Naive thymus-derived CD4-positive, alpha-beta T cell (primary cell): ENCODE measurements at regions of chr18 and their contacts with region 1.

Region 1: DNA sequence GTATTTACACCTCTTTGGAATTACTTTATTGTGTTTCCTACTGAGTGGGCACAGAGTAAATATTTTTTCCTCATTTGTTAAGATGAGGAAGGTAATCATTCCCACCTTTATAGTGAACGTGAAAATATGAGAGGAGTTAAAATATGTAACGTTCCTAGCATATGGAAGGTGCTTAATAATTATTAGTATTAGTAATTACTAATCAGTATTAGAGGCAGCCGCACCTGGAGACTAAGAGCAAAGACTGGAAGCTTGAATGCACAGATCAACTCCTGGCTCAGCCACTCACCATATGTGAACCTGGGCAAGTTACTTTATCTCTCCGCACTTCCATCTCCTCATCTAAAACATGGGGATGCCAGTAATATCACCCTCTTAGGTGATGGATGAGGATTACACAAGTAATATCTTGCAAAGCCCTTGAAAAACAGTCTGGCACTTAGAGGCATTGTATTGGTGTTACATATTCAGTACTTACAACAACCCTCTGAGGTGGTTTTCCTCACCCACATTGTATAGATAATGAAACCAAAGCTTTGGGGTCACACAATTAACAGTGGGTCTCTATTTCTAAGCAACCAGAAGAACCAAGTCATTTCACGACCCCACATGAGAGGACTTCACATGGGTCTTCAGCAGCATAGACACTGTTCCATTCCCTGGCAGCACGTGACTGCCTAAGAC is 100.3 kb upstream of the KCTD1 start:
- DNase-seq: no peak
- ATAC-seq: no peak
- H3K4me3 ChIP-seq: no peak overlapping the region
- H3K4me3 Mint-ChIP-seq: no peak overlapping the region
- H3K27ac ChIP-seq: no peak overlapping the region
- H3K27ac Mint-ChIP-seq: no peak overlapping the region
- H3K4me1 ChIP-seq: no peaks in the 10 kb centered on the region
- H3K4me1 Mint-ChIP-seq: peaks cover 0 to 2% (median 0%) of the 10 kb centered on the region in 7 donors
- H3K27me3 ChIP-seq: no peaks in the 10 kb centered on the region
- H3K27me3 Mint-ChIP-seq: peaks cover 30 to 59% (median 40%) of the 10 kb centered on the region in 5 donors

Region 2: DNA sequence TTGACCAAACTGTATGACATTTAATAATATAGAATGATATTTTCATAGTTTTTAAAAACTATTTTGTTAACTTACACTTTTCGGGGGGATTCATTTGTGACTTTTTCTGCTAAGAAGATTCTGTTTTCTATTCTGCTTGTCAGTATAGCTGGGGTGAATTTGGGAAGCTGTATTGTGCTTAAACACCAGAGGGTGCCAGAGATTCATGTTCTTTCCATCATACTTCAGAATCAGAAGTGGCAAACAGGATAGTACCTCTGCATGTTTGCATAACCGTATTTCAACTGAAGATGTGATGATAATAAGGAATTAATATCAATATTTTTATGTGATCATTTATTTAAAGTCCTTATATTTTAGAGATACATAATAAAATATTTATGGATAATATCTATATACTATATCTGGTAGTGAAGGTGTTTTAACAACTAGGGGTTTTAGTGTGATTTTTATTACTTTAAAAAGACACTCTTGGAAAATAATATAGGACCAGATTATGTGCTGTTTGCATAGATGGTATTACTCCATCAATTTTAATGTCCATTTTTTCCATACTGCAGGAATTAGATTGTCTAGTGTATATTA is 341.4 kb before region 1 on chr18:
- CTCF ChIA-PET with region 1: no interaction called
- POLR2A ChIA-PET with region 1: no interaction called
- intact Hi-C with region 1: loop called in 1 of 2 experiments (anchors 1 kb)
- DNase-seq: peak in 5 of 9 donors; percentile 11 to 39 (median 25)
- ATAC-seq: no peak
- H3K4me3 ChIP-seq: no peak overlapping the region
- H3K4me3 Mint-ChIP-seq: no peak overlapping the region
- H3K27ac ChIP-seq: no peak overlapping the region
- H3K27ac Mint-ChIP-seq: no peak overlapping the region
- H3K4me1 ChIP-seq: no peaks in the 10 kb centered on the region
- H3K4me1 Mint-ChIP-seq: peaks cover 0 to 4% (median 2%) of the 10 kb centered on the region in 7 donors
- H3K27me3 ChIP-seq: no peaks in the 10 kb centered on the region
- H3K27me3 Mint-ChIP-seq: no peaks in the 10 kb centered on the region

Region 3: GRCh38 chr18:26383454-26384270 is 265.0 kb before region 1 on chr18:
- CTCF ChIA-PET with region 1: no interaction called
- POLR2A ChIA-PET with region 1: no interaction called
- intact Hi-C with region 1: loop called (anchors 1 to 2 kb)
- DNase-seq: peak in 5 of 9 donors; percentile 13 to 33 (median 28)
- ATAC-seq: peak; percentile 58
- H3K4me3 ChIP-seq: no peak overlapping the region
- H3K4me3 Mint-ChIP-seq: no peak overlapping the region
- H3K27ac ChIP-seq: no peak overlapping the region
- H3K27ac Mint-ChIP-seq: no peak overlapping the region
- H3K4me1 ChIP-seq: no peaks in the 10 kb centered on the region
- H3K4me1 Mint-ChIP-seq: peaks cover 0 to 6% (median 0%) of the 10 kb centered on the region in 7 donors
- H3K27me3 ChIP-seq: no peaks in the 10 kb centered on the region
- H3K27me3 Mint-ChIP-seq: no peaks in the 10 kb centered on the region

Region 4: GRCh38 chr18:26621161-26622026 is 27.3 kb before region 1 on chr18:
- CTCF ChIA-PET with region 1: no interaction called
- POLR2A ChIA-PET with region 1: no interaction called
- intact Hi-C with region 1: loop called in 1 of 2 experiments (anchors 2 kb)
- DNase-seq: peak in 1 of 9 donors; percentile 23
- ATAC-seq: peak; percentile 62
- H3K4me3 ChIP-seq: no peak overlapping the region
- H3K4me3 Mint-ChIP-seq: peak overlapping the region in 3 of 10 donors; percentile 46 to 65 (median 49)
- H3K27ac ChIP-seq: no peak overlapping the region
- H3K27ac Mint-ChIP-seq: no peak overlapping the region
- H3K4me1 ChIP-seq: no peaks in the 10 kb centered on the region
- H3K4me1 Mint-ChIP-seq: no peaks in the 10 kb centered on the region
- H3K27me3 ChIP-seq: no peaks in the 10 kb centered on the region
- H3K27me3 Mint-ChIP-seq: peaks cover 2 to 26% (median 20%) of the 10 kb centered on the region in 5 donors